Transverse colon (tissue), 4 donors: ENCODE measurements at regions of chr2 and their contacts with region 1.

Region 1: DNA sequence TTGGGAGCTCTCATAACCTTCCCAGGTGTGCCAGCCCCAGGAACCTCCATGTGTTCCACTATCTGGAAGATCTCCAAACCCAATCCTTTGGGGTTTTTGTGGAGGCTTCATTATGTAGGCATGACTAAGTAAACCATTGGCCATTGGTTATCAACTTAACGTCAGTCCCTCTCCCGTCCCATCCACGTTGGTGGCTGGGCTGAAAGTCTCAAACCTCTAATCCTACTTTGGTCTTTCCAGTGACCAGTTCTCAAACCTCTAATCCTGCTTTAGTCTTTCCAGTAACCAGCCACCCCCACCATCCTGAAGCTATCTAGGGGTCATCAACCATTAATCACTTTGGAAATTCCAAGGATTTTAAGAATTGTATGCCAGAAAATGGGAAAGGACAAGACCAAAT is 704.7 kb upstream of the TMEFF2 start:
- DNase-seq: no peak
- H3K4me3 ChIP-seq: no peak overlapping the region
- H3K27ac ChIP-seq: no peak overlapping the region
- H3K4me1 ChIP-seq: no peaks in the 10 kb centered on the region
- H3K27me3 ChIP-seq: no peaks in the 10 kb centered on the region
- CTCF ChIP-seq: no peak
- EP300 ChIP-seq: no peak
- POLR2A ChIP-seq: no peak

Region 2: DNA sequence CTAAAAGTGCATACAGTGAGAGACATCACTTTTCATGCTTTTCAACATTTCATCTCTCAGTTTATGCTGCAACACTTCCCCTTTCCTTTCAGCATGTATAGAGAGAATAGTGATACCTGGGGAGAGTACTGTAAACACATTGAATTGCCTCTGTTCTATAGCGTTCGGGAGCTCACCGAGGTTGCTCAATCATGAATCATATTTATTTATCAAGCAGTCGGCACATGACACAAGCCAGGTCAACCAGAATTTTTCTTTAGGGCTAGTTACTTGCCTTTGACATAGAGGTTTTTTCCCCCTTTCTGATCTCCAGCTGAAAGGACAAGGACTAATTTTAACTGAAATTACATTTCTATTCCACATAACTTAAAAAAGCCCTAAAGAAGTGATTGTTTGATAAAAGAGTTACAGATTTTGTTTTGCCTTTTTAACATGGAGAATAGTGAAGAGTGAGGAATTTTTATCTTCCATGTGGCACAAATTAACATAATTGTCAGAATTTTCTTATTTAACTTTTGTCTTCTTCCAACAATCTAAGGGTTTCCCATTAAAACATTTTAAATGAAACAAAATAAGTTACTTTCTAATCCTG is 13.8 kb before region 1 on chr2:
- in situ Hi-C with region 1: no loop called
- intact Hi-C with region 1: loop called (anchors 1 kb)
- DNase-seq: no peak
- H3K4me3 ChIP-seq: no peak overlapping the region
- H3K27ac ChIP-seq: no peak overlapping the region
- H3K4me1 ChIP-seq: no peaks in the 10 kb centered on the region
- H3K27me3 ChIP-seq: no peaks in the 10 kb centered on the region
- CTCF ChIP-seq: no peak
- EP300 ChIP-seq: no peak
- POLR2A ChIP-seq: no peak